ENCODE measurements at regions of chr5 and their contacts with region 1.

Region 1: DNA sequence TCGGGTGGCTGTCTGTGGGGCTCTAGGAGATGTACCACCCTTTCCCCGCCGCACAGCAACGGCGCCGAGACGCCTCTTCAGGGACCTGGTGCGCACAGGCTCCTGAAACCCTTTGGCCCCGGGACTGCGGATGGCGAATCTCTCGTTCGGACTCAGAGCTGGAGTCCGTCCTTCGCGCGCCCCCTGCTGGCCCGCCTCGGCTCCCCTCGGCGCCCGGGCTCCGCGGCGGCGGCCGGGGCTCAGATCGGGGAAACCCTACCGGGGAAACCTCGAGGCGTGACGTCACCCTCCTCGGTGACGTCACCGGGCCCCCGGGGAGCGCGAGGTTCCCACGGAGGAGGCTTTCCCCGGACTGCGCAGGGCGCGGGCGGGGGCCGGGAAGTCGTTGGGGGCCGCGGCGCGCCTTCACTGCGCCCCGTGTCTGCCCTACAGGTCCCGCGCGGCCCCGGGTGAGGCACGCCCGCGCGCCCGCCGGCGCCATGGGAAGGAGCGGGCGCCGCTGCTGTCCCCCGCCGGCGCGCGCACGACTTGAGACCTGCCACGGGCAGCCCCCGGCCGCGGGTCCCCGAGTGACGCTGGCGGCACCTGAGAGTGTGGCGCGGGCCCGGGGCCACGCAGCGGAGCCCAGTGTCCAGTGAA is 7.9 kb downstream of the PRR7 start:
- DNase-seq: peak; percentile 95
- H3K4me3 Mint-ChIP-seq: peak overlapping the region; percentile 78
- H3K27ac Mint-ChIP-seq: peak overlapping the region; percentile 66
- H3K4me1 Mint-ChIP-seq: peaks cover 11% of the 10 kb centered on the region
- H3K27me3 Mint-ChIP-seq: no peaks in the 10 kb centered on the region

Region 2: DNA sequence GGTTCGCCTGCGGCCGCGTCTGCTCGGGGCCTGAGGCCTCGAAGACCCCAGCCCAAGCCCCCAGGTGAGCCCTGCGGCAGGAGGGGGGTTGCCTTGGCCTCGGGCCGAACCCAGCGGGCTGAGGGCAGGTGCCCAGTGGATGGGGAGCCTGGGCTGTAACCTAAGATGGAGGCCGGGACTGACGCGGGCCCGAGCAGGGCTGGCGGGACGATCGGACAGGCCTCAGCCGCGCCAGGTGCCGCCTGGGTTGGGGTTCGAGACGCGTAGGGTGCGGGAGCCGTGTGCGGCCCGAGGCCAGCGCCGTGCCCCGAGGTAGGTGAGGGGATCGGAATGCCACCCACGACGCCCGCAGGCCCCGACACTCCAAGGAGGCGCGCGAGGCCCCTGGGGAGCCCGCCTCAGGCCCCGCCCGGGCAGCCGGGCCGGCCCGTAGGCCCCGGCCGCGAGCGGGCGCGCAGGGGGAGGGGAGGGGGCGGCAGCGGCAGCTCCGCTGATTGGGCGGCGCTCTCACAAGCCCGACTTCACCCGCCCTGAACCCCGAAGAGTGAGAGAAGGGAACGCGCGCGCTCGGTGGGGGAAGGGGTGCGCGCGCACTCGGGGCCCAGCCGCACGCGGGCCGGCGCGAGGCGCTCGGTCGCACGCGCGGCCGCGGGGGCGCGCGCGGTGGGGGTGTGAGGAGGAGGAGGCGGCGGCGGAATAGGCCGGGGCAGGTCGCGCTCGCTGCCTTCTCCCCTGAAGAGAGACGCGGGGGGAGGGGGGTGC is 321.2 kb before region 1 on chr5 and contains the start of gene NSD1:
- CTCF ChIA-PET with region 1: no interaction called
- POLR2A ChIA-PET with region 1: no interaction called
- intact Hi-C with region 1: loop called (anchors 1 kb)
- DNase-seq: peak; percentile 93
- H3K4me3 Mint-ChIP-seq: peak within 1 kb of the TSS; percentile 90
- H3K27ac Mint-ChIP-seq: peak within 1 kb of the TSS; percentile 89
- H3K4me1 Mint-ChIP-seq: peaks cover 46% of the 10 kb centered on the region
- H3K27me3 Mint-ChIP-seq: no peaks in the 10 kb centered on the region
- total RNA-seq, gene NSD1: 54.6 to 55.5 TPM

Region 3: DNA sequence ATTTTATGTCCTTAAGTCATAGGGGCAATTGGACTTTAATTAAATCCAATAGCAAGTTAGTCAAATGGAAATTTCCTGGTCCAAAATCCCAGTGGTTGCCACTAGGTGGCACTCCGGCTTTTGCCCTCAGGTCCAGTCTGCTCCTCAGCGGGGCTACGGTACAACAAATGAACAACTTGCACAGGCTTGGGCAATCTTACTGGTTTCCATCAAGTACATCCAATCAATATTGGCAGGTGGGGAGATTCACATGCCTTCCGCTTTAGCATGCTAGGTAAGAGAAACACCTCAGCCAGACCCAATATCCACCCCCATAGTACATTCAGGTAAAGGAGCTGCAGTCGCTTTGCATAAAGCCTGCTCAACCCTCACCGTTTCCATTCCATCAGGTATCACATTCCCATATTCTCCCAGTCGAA is 136.5 kb before region 1 on chr5:
- CTCF ChIA-PET with region 1: interaction called, 17 read pairs
- POLR2A ChIA-PET with region 1: interaction called, 3 read pairs
- intact Hi-C with region 1: no loop called
- DNase-seq: peak; percentile 86
- H3K4me3 Mint-ChIP-seq: no peak overlapping the region
- H3K27ac Mint-ChIP-seq: no peak overlapping the region
- H3K4me1 Mint-ChIP-seq: peaks cover 15% of the 10 kb centered on the region
- H3K27me3 Mint-ChIP-seq: no peaks in the 10 kb centered on the region

Region 4: DNA sequence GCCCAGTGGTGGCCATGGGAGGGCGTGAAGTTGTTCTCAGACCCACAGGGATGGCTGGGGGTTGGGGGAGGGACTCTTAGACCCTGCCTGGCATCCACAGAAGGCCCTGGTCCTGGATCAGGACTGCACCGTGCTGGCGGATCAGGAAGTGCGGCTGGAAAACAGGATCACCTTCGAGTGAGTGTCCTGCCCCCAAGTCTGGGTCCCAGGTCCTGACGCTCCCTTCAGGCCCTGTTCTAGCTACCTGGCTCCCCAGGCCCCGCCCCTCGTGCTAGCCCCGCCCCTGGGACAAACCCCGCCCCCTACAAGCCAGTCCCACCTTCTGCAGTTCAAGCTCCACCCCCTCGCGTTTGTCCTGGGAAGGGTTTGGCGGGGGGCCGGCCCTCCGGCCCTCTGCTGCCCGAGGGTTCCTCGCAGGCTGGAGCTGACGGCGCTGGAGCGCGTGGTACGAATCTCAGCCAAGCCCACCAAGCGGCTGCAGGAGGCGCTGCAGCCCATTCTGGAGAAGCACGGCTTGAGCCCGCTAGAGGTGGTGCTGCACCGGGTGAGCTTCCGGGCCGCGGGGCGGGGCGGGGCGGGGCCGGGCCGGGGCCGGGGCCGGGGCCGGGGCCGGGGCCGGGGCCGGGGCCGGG is 83.9 kb before region 1 on chr5:
- CTCF ChIA-PET with region 1: interaction called, 26 read pairs
- POLR2A ChIA-PET with region 1: interaction called, 4 read pairs
- intact Hi-C with region 1: no loop called
- DNase-seq: peak; percentile 79
- H3K4me3 Mint-ChIP-seq: peak overlapping the region; percentile 74
- H3K27ac Mint-ChIP-seq: peak overlapping the region; percentile 38
- H3K4me1 Mint-ChIP-seq: peaks cover 65% of the 10 kb centered on the region
- H3K27me3 Mint-ChIP-seq: no peaks in the 10 kb centered on the region

Region 5: GRCh38 chr5:177425801-177426565 is 28.5 kb before region 1 on chr5:
- CTCF ChIA-PET with region 1: interaction called, 126 read pairs
- POLR2A ChIA-PET with region 1: interaction called, 319 read pairs
- intact Hi-C with region 1: loop called (anchors 1 kb)
- DNase-seq: peak; percentile 100
- H3K4me3 Mint-ChIP-seq: peak overlapping the region; percentile 87
- H3K27ac Mint-ChIP-seq: peak overlapping the region; percentile 94
- H3K4me1 Mint-ChIP-seq: peaks cover 35% of the 10 kb centered on the region
- H3K27me3 Mint-ChIP-seq: no peaks in the 10 kb centered on the region

Region 6: GRCh38 chr5:177440211-177440971 is 14.1 kb before region 1 on chr5:
- CTCF ChIA-PET with region 1: interaction called, 43 read pairs
- POLR2A ChIA-PET with region 1: interaction called, 32 read pairs
- intact Hi-C with region 1: no loop called
- DNase-seq: peak; percentile 86
- H3K4me3 Mint-ChIP-seq: peak overlapping the region; percentile 32
- H3K27ac Mint-ChIP-seq: peak overlapping the region; percentile 91
- H3K4me1 Mint-ChIP-seq: peaks cover 69% of the 10 kb centered on the region
- H3K27me3 Mint-ChIP-seq: no peaks in the 10 kb centered on the region

Region 7: DNA sequence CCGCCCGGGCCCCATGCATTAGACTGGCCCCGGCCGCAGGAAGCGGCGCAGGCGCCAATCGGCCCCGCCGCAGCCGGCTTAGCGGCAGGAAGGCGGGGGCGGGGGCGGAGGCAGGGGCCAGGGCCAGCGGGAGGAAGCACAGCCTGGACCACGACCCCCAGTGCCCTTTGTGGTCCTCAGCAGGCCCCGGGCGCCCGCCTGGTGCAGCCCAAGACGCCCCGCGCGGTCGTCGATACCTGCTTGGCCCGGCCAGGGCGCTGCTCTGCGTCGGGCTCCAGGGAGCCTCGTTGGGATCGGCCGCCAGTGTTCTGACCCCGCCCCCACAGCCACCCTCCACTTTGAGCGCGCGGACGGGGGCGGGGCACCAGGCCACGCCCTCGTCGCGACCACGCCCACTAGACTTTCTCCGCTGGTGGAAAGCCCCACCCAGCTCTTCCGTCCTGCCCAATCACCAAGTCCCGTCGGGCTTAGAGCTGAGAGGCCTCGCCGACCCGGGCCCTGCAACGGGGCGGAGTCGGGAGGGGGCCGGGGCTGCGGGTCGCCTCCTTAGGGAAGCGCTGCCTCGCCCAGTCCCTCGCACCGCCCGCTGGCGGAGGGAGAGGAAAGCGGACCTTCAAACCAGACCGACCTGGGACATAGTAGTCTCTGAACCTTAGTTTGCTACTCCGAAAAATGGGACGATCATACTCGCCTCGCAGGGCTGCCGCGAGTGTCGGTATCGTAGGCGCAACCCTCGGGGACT is 42.9 kb after region 1 on chr5 and contains the start of gene PDLIM7:
- CTCF ChIA-PET with region 1: interaction called, 19 read pairs
- POLR2A ChIA-PET with region 1: interaction called, 5 read pairs
- intact Hi-C with region 1: loop called (anchors 1 kb)
- DNase-seq: peak; percentile 96
- H3K4me3 Mint-ChIP-seq: peak within 1 kb of the TSS; percentile 82
- H3K27ac Mint-ChIP-seq: peak within 1 kb of the TSS; percentile 23
- H3K4me1 Mint-ChIP-seq: peaks cover 27% of the 10 kb centered on the region
- H3K27me3 Mint-ChIP-seq: peaks cover 8% of the 10 kb centered on the region
- total RNA-seq, gene PDLIM7: 50.2 to 56.6 TPM

Measured in activated CD4-positive, alpha-beta memory T cell treated with anti-CD3 and anti-CD28 coated beads for 36 hours (primary cell).